ENCODE measurements at regions of chrX and their contacts with region 1.

Region 1: DNA sequence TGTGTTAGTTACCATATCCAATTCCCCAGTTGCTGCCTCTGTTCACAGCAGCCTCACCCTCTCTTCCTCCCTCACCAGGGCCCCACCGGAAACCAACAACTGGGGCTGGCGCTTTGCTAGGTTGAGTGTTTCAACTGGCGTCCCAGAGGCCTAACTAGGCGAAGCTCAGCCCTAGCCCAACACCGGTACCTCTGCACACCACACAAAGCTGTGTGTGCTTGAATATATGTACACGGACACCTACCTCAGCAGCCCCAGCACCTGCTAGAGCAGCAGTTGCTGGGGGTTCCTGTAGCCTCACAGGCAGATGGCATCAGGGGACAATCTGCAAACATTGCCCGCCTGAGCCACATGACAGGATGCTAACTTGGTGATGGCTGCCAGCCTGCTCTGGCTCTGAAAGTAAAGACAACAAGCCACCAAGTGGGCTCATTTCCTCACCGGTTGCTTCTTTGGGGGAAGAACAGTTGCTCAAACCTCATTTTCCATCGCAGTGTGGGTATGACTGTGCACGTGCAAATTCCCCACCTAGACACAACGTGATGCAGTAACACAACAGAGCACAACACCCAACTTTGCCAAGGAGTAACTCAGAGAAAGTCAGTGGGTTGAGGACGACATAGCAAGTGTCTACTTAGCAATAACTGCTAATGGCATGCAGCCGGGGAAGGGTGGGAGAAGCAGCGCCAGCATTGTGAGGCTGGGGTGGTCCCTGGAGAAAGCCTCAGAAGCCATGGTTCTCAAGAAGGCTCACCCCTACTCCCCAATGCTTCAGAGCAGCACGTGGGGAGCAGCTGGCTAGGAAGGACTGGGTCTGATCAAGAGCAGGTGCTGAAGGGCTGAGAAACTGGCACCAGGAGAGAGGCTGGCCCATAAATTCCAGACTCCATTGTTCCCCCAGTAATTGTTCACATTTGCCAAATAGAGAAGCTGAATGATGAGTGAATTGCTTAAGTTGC is 139.5 kb downstream of the SH3KBP1 start:
- DNase-seq: peak; percentile 35 to 90 (median 84)
- ATAC-seq: peak; percentile 89
- H3K4me3 ChIP-seq: peak overlapping the region; percentile 13
- H3K4me3 Mint-ChIP-seq: peak overlapping the region; percentile 42 to 83 (median 71)
- H3K27ac ChIP-seq: peak overlapping the region; percentile 80
- H3K27ac Mint-ChIP-seq: peak overlapping the region; percentile 94 to 99 (median 98)
- H3K4me1 ChIP-seq: peaks cover 88 to 97% of the 10 kb centered on the region in 2 donors
- H3K4me1 Mint-ChIP-seq: peaks cover 33 to 99% (median 88%) of the 10 kb centered on the region in 7 donors
- H3K27me3 ChIP-seq: no peaks in the 10 kb centered on the region
- H3K27me3 Mint-ChIP-seq: no peaks in the 10 kb centered on the region

Region 2: GRCh38 chrX:19544693-19545305 is 203.1 kb before region 1 on chrX:
- CTCF ChIA-PET with region 1: no interaction called
- POLR2A ChIA-PET with region 1: no interaction called
- intact Hi-C with region 1: no loop called
- DNase-seq: peak in 8 of 9 donors; percentile 9 to 43 (median 30)
- ATAC-seq: peak; percentile 76
- H3K4me3 ChIP-seq: no peak overlapping the region
- H3K4me3 Mint-ChIP-seq: no peak overlapping the region
- H3K27ac ChIP-seq: no peak overlapping the region
- H3K27ac Mint-ChIP-seq: peak overlapping the region in 5 of 9 donors; percentile 40 to 83 (median 72)
- H3K4me1 ChIP-seq: no peaks in the 10 kb centered on the region
- H3K4me1 Mint-ChIP-seq: peaks cover 0 to 12% (median 3%) of the 10 kb centered on the region in 7 donors
- H3K27me3 ChIP-seq: no peaks in the 10 kb centered on the region
- H3K27me3 Mint-ChIP-seq: no peaks in the 10 kb centered on the region

Region 3: DNA sequence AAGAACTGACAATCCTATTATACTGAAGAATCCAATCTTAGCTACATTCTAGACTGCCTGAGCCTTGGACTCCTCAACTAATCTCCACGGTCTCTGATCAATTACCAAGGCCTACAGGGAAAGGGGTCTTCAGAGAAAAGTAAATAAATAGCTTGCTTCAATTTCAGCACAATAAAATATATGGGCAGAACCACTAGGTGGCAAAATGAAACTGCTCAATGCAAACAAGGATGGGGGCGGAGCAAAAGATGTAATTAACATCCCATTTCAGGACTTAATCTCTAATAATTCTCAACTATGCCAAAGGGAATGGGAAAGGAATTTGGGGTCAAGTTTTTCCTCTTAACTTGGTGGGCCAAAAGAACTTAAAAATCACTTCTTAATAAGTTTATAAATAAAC is 154.2 kb before region 1 on chrX:
- CTCF ChIA-PET with region 1: no interaction called
- POLR2A ChIA-PET with region 1: no interaction called
- intact Hi-C with region 1: loop called in 1 of 2 experiments (anchors 1 kb)
- DNase-seq: peak in 7 of 9 donors; percentile 11 to 36 (median 21)
- ATAC-seq: peak; percentile 50
- H3K4me3 ChIP-seq: no peak overlapping the region
- H3K4me3 Mint-ChIP-seq: no peak overlapping the region
- H3K27ac ChIP-seq: no peak overlapping the region
- H3K27ac Mint-ChIP-seq: peak overlapping the region in 3 of 9 donors; percentile 10 to 66 (median 56)
- H3K4me1 ChIP-seq: no peaks in the 10 kb centered on the region
- H3K4me1 Mint-ChIP-seq: peaks cover 0 to 21% (median 10%) of the 10 kb centered on the region in 7 donors
- H3K27me3 ChIP-seq: no peaks in the 10 kb centered on the region
- H3K27me3 Mint-ChIP-seq: no peaks in the 10 kb centered on the region

Region 4: DNA sequence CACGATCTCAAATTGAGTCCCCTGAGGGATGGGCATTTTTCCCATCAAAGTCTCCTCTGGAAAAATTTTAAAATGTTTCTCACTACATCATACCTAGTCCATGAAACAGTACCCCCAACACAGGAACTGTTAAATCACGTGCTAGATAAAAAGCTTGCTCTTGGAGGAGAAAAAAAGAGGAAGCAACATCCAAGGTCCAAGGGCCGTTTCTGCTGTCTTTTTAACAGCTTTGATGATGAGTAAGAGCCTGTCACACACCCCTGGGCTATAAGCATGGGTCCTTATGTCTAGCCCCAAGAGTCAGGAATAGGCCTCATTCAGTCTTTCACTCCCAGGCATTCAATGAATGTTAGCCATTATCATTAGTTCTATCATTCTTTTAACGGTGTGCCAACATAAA is 10.6 kb after region 1 on chrX:
- CTCF ChIA-PET with region 1: interaction called, 4 read pairs
- POLR2A ChIA-PET with region 1: interaction called, 11 read pairs
- intact Hi-C with region 1: loop called in 1 of 2 experiments (anchors 1 kb)
- DNase-seq: no peak
- ATAC-seq: peak; percentile 54
- H3K4me3 ChIP-seq: no peak overlapping the region
- H3K4me3 Mint-ChIP-seq: peak overlapping the region in 6 of 10 donors; percentile 5 to 54 (median 44)
- H3K27ac ChIP-seq: no peak overlapping the region
- H3K27ac Mint-ChIP-seq: peak overlapping the region in 7 of 9 donors; percentile 6 to 81 (median 55)
- H3K4me1 ChIP-seq: peaks cover 22 to 30% of the 10 kb centered on the region in 2 donors
- H3K4me1 Mint-ChIP-seq: peaks cover 28 to 91% (median 86%) of the 10 kb centered on the region in 7 donors
- H3K27me3 ChIP-seq: no peaks in the 10 kb centered on the region
- H3K27me3 Mint-ChIP-seq: no peaks in the 10 kb centered on the region

Region 5: DNA sequence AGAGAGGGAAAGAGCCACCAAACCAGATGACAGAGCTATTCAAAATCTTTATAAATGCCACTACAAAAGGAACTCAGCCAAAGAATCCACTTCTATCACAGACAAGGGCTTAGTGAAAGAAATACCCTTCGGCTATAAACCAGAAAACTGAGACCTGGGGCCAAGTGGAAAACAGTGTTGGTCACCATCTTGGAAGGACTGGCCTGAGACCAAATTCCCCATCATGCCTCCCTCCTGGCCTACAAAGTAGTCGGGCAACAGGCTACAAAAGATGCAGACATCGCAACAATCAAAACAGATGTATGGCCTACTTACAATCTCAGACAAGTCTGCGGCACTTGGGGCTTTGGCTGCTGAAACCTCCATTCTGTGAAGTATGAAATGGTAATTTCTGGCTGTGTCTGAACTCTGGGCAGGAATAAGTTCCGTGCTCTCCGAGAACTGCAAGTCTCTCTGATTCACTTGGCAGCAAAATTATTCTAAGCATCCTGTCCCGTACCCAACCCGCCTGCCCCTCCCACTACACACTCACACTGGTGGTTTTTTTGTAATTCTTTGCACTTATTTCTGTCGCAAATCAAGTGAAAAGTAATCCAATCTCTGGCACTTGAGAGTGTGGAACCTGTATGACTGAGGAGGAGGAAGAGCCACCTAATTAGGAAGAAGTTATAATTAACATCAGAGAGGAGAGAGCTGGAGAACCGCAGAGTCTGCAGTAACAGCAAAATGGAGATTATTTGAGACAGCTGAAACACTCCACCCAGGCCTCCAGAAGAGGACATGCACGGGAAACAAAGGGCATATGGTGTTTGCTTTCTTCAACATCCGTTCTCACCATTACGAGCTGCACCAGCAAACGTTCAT is 51.6 kb after region 1 on chrX:
- CTCF ChIA-PET with region 1: interaction called, 5 read pairs
- POLR2A ChIA-PET with region 1: interaction called, 44 read pairs
- intact Hi-C with region 1: loop called (anchors 1 kb)
- DNase-seq: peak in 7 of 9 donors; percentile 55 to 79 (median 72)
- ATAC-seq: peak; percentile 82
- H3K4me3 ChIP-seq: peak overlapping the region; percentile 86
- H3K4me3 Mint-ChIP-seq: peak overlapping the region; percentile 89 to 97 (median 94)
- H3K27ac ChIP-seq: peak overlapping the region; percentile 74
- H3K27ac Mint-ChIP-seq: peak overlapping the region; percentile 92 to 97 (median 95)
- H3K4me1 ChIP-seq: peaks cover 53 to 58% of the 10 kb centered on the region in 2 donors
- H3K4me1 Mint-ChIP-seq: peaks cover 15 to 74% (median 64%) of the 10 kb centered on the region in 7 donors
- H3K27me3 ChIP-seq: no peaks in the 10 kb centered on the region
- H3K27me3 Mint-ChIP-seq: no peaks in the 10 kb centered on the region

Region 6: GRCh38 chrX:19840899-19841648 is 93.1 kb after region 1 on chrX:
- CTCF ChIA-PET with region 1: no interaction called
- POLR2A ChIA-PET with region 1: interaction called, 14 read pairs
- intact Hi-C with region 1: loop called (anchors 2 kb)
- DNase-seq: peak in 7 of 9 donors; percentile 12 to 48 (median 37)
- ATAC-seq: peak; percentile 87
- H3K4me3 ChIP-seq: peak overlapping the region; percentile 11
- H3K4me3 Mint-ChIP-seq: peak overlapping the region; percentile 22 to 87 (median 78)
- H3K27ac ChIP-seq: peak overlapping the region; percentile 32
- H3K27ac Mint-ChIP-seq: peak overlapping the region; percentile 73 to 94 (median 88)
- H3K4me1 ChIP-seq: peaks cover 7 to 22% of the 10 kb centered on the region in 2 donors
- H3K4me1 Mint-ChIP-seq: peaks cover 20 to 75% (median 65%) of the 10 kb centered on the region in 7 donors
- H3K27me3 ChIP-seq: no peaks in the 10 kb centered on the region
- H3K27me3 Mint-ChIP-seq: no peaks in the 10 kb centered on the region

Region 7: DNA sequence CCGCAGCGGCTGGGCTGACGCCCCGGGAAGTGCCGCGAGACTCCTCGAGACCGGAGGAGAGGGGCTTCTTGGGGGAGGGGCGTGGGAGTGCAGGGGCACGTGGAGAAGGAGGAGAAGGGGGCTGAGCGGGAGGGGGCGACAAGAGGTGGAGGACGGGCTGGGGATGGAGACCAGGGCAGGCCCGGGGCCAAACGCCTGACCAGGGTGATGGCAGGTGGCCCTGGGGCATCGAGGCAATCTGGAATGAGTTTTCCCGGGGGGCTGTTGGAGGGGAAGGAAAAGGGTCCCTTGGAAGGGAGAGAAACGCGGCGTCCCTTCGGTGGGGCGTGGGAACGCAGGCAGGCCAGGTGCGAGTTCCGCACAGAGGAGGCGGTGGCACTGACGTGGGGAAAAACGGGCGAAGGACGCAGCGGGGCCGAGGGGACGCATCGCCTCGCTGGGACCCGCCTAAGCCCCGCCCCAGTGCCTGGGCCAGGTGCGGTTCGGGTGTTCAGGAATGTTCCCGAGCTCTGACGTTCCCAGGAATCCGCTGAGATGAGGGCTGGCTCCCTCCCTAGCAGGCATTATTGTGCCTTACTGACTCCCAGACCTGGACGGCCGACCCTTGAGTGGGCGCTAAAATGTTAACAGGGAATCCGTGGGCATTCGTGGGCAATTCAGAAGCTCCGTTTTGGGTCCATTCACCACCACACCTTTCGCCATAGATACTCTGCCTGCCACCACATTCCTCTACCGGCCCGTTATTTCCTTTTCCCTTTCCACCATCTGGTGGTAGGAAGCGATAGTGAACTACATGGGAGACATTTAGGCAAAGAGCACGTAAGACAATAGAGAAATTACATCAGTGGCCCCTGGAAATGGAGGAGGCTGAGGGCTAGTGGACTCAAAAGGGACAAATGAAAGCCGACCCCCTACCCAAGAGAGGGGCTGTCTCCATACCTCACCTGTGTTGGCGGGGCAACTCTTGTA is 140.3 kb after region 1 on chrX:
- CTCF ChIA-PET with region 1: interaction called, 5 read pairs
- POLR2A ChIA-PET with region 1: interaction called, 5 read pairs
- intact Hi-C with region 1: loop called (anchors 1 to 2 kb)
- DNase-seq: peak; percentile 14 to 64 (median 54)
- ATAC-seq: peak; percentile 61
- H3K4me3 ChIP-seq: peak overlapping the region; percentile 55
- H3K4me3 Mint-ChIP-seq: peak overlapping the region; percentile 78 to 86 (median 82)
- H3K27ac ChIP-seq: peak overlapping the region; percentile 68
- H3K27ac Mint-ChIP-seq: peak overlapping the region; percentile 74 to 95 (median 89)
- H3K4me1 ChIP-seq: peaks cover 5 to 7% of the 10 kb centered on the region in 2 donors
- H3K4me1 Mint-ChIP-seq: peaks cover 17 to 40% (median 36%) of the 10 kb centered on the region in 7 donors
- H3K27me3 ChIP-seq: no peaks in the 10 kb centered on the region
- H3K27me3 Mint-ChIP-seq: no peaks in the 10 kb centered on the region